WTC11 (cell line): ENCODE measurements at regions of chr19 and their contacts with region 1.

Region 1: DNA sequence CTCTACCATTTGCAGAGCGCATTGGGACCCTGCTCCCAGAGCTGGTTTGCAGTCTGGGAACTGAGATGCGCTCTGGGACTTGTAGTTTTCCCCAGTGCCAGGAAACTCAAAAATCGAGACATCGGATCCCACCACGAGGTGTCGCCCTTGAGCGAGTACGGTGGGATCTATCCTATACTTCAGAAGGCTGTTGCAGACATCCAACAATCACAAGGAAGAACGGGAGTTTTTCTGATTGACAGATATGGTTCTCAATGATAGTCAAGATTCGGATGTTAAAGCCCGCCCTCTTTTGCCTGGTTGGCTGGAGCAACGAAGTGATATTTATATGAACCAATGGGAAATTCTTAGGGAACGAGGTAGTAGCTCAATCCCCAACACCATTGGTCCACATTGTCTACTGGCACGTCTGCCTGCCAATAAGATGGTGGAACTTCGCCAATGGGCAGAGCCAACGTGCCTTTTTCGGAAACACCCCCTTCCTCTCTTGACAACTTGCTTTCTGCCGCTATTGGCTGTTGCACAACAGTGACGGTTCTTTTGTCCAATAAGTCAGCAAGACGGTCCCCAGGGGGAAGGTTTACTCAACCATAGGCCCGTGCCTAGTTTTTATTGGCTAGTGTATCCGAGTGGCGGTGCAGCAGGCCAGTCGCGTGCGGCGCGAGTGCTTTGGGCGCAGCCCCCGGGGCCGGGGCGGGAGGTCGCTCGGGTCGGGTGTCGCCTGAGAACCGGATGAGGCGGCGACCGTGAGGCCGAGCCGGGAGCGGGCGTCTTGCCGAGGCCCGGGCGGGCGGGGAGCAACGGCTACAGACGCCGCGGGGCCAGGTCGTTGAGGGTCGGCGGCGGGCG is at the start of gene DNM2:
- DNase-seq: peak; percentile 100
- ATAC-seq: peak; percentile 91
- H3K4me3 Mint-ChIP-seq: peak within 1 kb of the TSS; percentile 89
- H3K27ac Mint-ChIP-seq: peak within 1 kb of the TSS; percentile 90
- H3K4me1 Mint-ChIP-seq: peaks cover 12% of the 10 kb centered on the region
- H3K27me3 Mint-ChIP-seq: no peaks in the 10 kb centered on the region
- CTCF ChIP-seq: peak; percentile 70
- total RNA-seq, gene DNM2: 120 to 131 TPM (median 123 TPM) in 3 replicates

Region 2: GRCh38 chr19:10580979-10581631 is 136.5 kb before region 1 on chr19:
- CTCF ChIA-PET with region 1: interaction called, 11 read pairs
- POLR2A ChIA-PET with region 1: no interaction called
- DNase-seq: peak; percentile 94
- ATAC-seq: peak; percentile 91
- H3K4me3 Mint-ChIP-seq: no peak overlapping the region
- H3K27ac Mint-ChIP-seq: peak overlapping the region; percentile 84
- H3K4me1 Mint-ChIP-seq: peaks cover 5% of the 10 kb centered on the region
- H3K27me3 Mint-ChIP-seq: no peaks in the 10 kb centered on the region
- CTCF ChIP-seq: peak; percentile 96

Region 3: GRCh38 chr19:10602330-10603083 is 115.1 kb before region 1 on chr19:
- CTCF ChIA-PET with region 1: no interaction called
- POLR2A ChIA-PET with region 1: no interaction called
- DNase-seq: peak; percentile 91
- ATAC-seq: peak; percentile 95
- H3K4me3 Mint-ChIP-seq: peak overlapping the region; percentile 84
- H3K27ac Mint-ChIP-seq: no peak overlapping the region
- H3K4me1 Mint-ChIP-seq: peaks cover 12% of the 10 kb centered on the region
- H3K27me3 Mint-ChIP-seq: peaks cover 18% of the 10 kb centered on the region
- CTCF ChIP-seq: no peak

Region 4: DNA sequence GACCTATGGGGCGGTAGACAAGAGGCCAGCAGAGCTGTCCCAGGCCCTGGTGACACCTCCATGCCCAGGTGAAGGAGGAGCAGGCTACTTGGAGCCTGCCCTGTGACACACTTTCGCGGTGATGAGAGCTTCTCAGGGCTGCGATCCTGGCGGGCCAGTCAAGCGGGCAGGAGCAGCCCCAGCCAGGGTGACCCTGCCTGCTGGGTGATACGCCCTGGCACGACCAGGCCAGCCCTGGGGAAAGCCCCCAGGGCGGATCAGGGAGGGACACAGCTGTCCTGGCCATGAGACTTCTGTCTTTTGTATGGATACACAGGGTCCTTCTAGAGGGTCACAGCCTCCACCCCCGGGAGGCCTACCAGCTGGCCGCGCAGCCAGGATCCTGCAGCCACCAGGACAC is 13.3 kb after region 1 on chr19:
- CTCF ChIA-PET with region 1: interaction called, 17 read pairs
- POLR2A ChIA-PET with region 1: interaction called, 4 read pairs
- DNase-seq: no peak
- ATAC-seq: no peak
- H3K4me3 Mint-ChIP-seq: no peak overlapping the region
- H3K27ac Mint-ChIP-seq: peak overlapping the region; percentile 49; the same call in 1 of the 2 replicates
- H3K4me1 Mint-ChIP-seq: 0 out of 2 replicates have a peak, but pooled peaks cover 3% of the 10 kb centered on the region
- H3K27me3 Mint-ChIP-seq: no peaks in the 10 kb centered on the region
- CTCF ChIP-seq: no peak

Region 5: GRCh38 chr19:10820173-10820572 is 102.6 kb after region 1 on chr19:
- CTCF ChIA-PET with region 1: interaction called, 20 read pairs
- POLR2A ChIA-PET with region 1: no interaction called
- DNase-seq: no peak
- ATAC-seq: peak; percentile 73
- H3K4me3 Mint-ChIP-seq: no peak overlapping the region
- H3K27ac Mint-ChIP-seq: no peak overlapping the region
- H3K4me1 Mint-ChIP-seq: no peaks in the 10 kb centered on the region
- H3K27me3 Mint-ChIP-seq: no peaks in the 10 kb centered on the region; the same call in 1 of the 2 replicates
- CTCF ChIP-seq: no peak

Region 6: DNA sequence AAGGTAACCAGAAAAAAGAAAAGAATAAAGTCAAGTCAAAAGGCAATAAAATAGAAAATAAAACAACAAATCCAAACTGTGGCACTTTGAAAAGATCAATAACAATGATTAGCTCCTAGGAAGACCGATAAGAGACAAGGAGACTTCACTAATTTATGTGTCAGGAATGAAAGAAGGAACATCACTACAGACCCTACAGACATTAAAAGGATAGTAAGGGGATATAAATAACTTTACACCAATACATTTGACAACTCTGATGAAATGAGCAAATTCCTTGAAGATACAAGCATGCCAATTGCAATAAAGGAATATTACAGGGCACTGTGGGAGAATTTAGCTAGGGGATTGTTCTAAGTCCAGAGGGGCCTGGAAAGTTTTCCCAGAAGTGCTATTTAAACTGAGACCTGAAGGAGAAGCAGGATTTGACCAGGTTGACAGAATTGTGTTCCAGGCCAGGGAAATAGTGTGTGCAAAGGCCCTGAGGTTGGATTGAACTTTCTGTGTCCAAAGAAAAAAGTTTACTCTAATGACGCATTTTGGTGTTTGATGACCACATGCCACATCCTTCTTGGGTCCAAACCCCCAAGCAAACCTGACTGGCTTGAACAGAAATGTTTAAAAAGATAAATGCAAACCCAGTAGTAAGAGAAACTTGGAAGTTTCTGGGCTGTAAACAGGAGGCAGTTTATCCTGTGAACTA is 129.1 kb after region 1 on chr19:
- CTCF ChIA-PET with region 1: no interaction called
- POLR2A ChIA-PET with region 1: no interaction called
- DNase-seq: no peak
- ATAC-seq: no peak
- H3K4me3 Mint-ChIP-seq: no peak overlapping the region
- H3K27ac Mint-ChIP-seq: no peak overlapping the region
- H3K4me1 Mint-ChIP-seq: no peaks in the 10 kb centered on the region
- H3K27me3 Mint-ChIP-seq: peaks cover 35% of the 10 kb centered on the region
- CTCF ChIP-seq: no peak

Region 7: GRCh38 chr19:10858204-10858828 is 140.7 kb after region 1 on chr19:
- CTCF ChIA-PET with region 1: interaction called, 55 read pairs
- POLR2A ChIA-PET with region 1: no interaction called
- DNase-seq: peak; percentile 64
- ATAC-seq: peak; percentile 63
- H3K4me3 Mint-ChIP-seq: no peak overlapping the region
- H3K27ac Mint-ChIP-seq: no peak overlapping the region
- H3K4me1 Mint-ChIP-seq: no peaks in the 10 kb centered on the region
- H3K27me3 Mint-ChIP-seq: peaks cover 2% of the 10 kb centered on the region; the same call in 1 of the 2 replicates
- CTCF ChIP-seq: peak; percentile 95